ENCODE measurements at regions of chr5 and their contacts with region 1.

Region 1: GRCh38 chr5:11918463-11919045 is 14.3 kb upstream of the CTNND2 start:
- DNase-seq: no peak
- ATAC-seq: no peak
- H3K4me3 ChIP-seq: no peak overlapping the region
- H3K4me3 Mint-ChIP-seq: no peak overlapping the region
- H3K27ac ChIP-seq: no peak overlapping the region
- H3K27ac Mint-ChIP-seq: no peak overlapping the region
- H3K4me1 ChIP-seq: no peaks in the 10 kb centered on the region
- H3K4me1 Mint-ChIP-seq: no peaks in the 10 kb centered on the region
- H3K27me3 ChIP-seq: no peaks in the 10 kb centered on the region
- H3K27me3 Mint-ChIP-seq: no peaks in the 10 kb centered on the region

Region 2: GRCh38 chr5:11890777-11891176 is 27.8 kb before region 1 on chr5:
- CTCF ChIA-PET with region 1: no interaction called
- POLR2A ChIA-PET with region 1: no interaction called
- DNase-seq: no peak
- ATAC-seq: no peak
- H3K4me3 ChIP-seq: no peak overlapping the region
- H3K4me3 Mint-ChIP-seq: no peak overlapping the region
- H3K27ac ChIP-seq: no peak overlapping the region
- H3K27ac Mint-ChIP-seq: no peak overlapping the region
- H3K4me1 ChIP-seq: no peaks in the 10 kb centered on the region
- H3K4me1 Mint-ChIP-seq: no peaks in the 10 kb centered on the region
- H3K27me3 ChIP-seq: no peaks in the 10 kb centered on the region
- H3K27me3 Mint-ChIP-seq: no peaks in the 10 kb centered on the region

Region 3: GRCh38 chr5:12805165-12805707 is 886.7 kb after region 1 on chr5:
- CTCF ChIA-PET with region 1: no interaction called
- POLR2A ChIA-PET with region 1: no interaction called
- DNase-seq: no peak
- ATAC-seq: no peak
- H3K4me3 ChIP-seq: no peak overlapping the region
- H3K4me3 Mint-ChIP-seq: no peak overlapping the region
- H3K27ac ChIP-seq: no peak overlapping the region
- H3K27ac Mint-ChIP-seq: no peak overlapping the region
- H3K4me1 ChIP-seq: no peaks in the 10 kb centered on the region
- H3K4me1 Mint-ChIP-seq: no peaks in the 10 kb centered on the region
- H3K27me3 ChIP-seq: no peaks in the 10 kb centered on the region
- H3K27me3 Mint-ChIP-seq: no peaks in the 10 kb centered on the region

Region 4: GRCh38 chr5:13625616-13626198 is 1707.2 kb after region 1 on chr5:
- CTCF ChIA-PET with region 1: no interaction called
- POLR2A ChIA-PET with region 1: interaction called in 1 of 2 experiments, 16 read pairs
- DNase-seq: no peak
- ATAC-seq: no peak
- H3K4me3 ChIP-seq: no peak overlapping the region
- H3K4me3 Mint-ChIP-seq: no peak overlapping the region
- H3K27ac ChIP-seq: no peak overlapping the region
- H3K27ac Mint-ChIP-seq: no peak overlapping the region
- H3K4me1 ChIP-seq: no peaks in the 10 kb centered on the region
- H3K4me1 Mint-ChIP-seq: no peaks in the 10 kb centered on the region
- H3K27me3 ChIP-seq: no peaks in the 10 kb centered on the region
- H3K27me3 Mint-ChIP-seq: no peaks in the 10 kb centered on the region